ENCODE measurements at regions of chr12 and their contacts with region 1.

Region 1: DNA sequence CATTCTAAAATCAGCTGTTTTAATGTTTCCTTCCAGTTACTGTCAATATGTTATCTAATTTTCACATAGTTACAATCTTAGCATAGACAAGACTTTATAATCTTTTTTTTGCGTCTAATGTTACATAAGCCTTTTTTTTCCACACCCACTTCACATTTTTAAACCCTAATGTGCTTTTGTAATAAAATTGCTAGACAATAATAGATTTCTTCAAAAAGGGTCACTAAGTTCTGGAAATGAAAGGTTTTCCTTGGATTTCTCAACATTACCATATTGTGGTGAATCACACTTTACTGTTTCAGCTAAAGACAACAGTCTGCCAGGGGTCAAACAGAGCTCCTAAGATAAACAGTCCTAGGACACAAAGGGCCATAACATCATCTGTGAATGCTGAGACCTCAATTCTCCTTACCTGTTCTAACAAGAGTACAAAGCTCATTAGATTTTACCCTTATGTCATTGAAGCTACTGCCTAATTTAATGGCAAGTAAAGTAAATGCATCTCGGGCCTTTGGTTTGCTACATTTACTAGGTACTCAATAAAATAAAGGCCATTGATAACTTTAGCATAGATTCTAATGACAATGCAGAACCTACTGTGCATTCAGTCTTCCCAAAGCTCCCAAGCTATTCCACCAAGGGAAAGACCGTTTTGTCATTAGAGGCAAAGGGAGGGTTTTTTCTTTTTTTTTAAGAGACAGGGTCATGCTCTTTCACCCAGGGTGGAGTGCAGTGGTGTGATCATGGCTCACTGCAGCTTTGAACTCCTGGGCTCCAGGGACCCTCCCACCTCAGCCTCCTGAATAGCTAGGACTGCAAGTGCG is 111.2 kb upstream of the SLC38A2 start:
- DNase-seq: peak; percentile 94
- ATAC-seq: peak; percentile 98
- H3K4me3 ChIP-seq: peak overlapping the region in 1 of 3 experiments; percentile 3; a peak in 1 of 6 replicates
- H3K27ac ChIP-seq: peak overlapping the region; percentile 73
- H3K4me1 ChIP-seq: peaks cover 82% of the 10 kb centered on the region
- H3K27me3 ChIP-seq: no peaks in the 10 kb centered on the region
- CTCF ChIP-seq: no peak
- EP300 ChIP-seq: peak in 1 of 2 experiments; percentile 90; a peak in 2 of 4 replicates
- POLR2A ChIP-seq: no peak
- RAD21 ChIP-seq: no peak

Region 2: DNA sequence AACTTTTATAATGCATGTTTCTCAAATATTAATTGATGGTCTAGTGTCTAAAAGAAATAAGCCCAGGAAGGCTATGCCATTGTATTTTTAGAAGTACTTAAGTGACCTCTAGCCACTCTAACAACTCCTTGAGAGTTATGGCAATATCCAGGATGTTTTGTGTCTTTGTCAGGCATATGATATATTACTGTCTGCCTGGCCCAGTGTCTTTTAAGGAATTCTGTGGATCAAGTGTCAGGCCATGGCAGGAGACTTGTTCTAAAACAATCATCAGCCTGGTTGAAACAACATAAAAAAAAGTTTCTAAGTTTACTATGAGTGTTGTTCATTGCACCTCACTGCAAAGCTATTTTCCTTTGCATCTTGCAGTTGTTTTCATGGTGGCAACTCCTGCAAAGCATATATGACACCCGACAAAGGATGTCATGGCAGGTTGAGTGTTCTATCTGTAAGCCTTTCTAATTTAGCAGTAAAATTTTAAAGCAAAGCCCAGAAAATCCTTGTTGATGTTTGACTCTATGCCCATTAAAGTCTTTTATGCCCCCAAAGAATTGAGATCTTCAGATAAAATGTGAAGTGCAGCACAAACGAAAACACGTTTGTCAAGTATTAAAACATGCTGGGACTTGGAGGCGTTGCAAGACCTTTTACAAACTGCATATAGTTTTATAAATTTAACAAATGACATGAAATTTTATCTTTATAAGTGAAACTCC is 21.7 kb before region 1 on chr12:
- CTCF ChIA-PET with region 1: no interaction called
- POLR2A ChIA-PET with region 1: no interaction called
- in situ Hi-C with region 1: no loop called
- intact Hi-C with region 1: no loop called
- DNase-seq: no peak
- ATAC-seq: no peak
- H3K4me3 ChIP-seq: no peak overlapping the region
- H3K27ac ChIP-seq: no peak overlapping the region
- H3K4me1 ChIP-seq: peaks cover 67% of the 10 kb centered on the region
- H3K27me3 ChIP-seq: no peaks in the 10 kb centered on the region
- CTCF ChIP-seq: no peak
- EP300 ChIP-seq: no peak
- POLR2A ChIP-seq: no peak
- RAD21 ChIP-seq: no peak

Region 3: GRCh38 chr12:46473634-46474329 is 10.0 kb before region 1 on chr12:
- CTCF ChIA-PET with region 1: no interaction called
- POLR2A ChIA-PET with region 1: interaction called, 25 read pairs
- in situ Hi-C with region 1: no loop called
- intact Hi-C with region 1: no loop called
- DNase-seq: peak; percentile 95
- ATAC-seq: peak; percentile 97
- H3K4me3 ChIP-seq: peak overlapping the region; percentile 14 to 40 (median 17); a peak in 4 of 6 replicates
- H3K27ac ChIP-seq: peak overlapping the region; percentile 89
- H3K4me1 ChIP-seq: peaks cover 93% of the 10 kb centered on the region
- H3K27me3 ChIP-seq: no peaks in the 10 kb centered on the region
- CTCF ChIP-seq: no peak
- EP300 ChIP-seq: peak in 1 of 2 experiments; percentile 98; a peak in 2 of 4 replicates
- POLR2A ChIP-seq: no peak
- RAD21 ChIP-seq: no peak

Measured in HepG2 (cell line).